Posterior vena cava (tissue), 2 donors: ENCODE measurements at regions of chr6 and their contacts with region 1.

Region 1: DNA sequence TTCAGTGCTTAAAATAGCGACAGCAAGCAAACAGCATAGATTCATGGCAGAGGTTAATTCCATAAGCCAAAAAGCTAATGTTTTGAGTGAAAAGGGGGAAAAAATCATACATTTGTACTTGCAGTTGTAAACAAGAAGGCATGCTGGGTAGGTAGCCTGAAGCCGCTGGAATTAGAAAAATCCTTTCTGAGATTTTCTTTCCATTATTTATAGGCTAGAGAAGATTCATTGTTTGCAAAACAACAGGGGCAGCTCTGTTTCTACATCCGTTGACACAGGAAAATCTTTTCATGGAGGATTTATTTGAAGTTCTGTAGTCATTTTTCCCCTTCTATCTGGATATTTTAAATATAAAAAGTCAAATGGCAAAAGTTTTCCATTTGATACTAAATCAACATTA is 843.9 kb downstream of the QKI start:
- DNase-seq: no peak

Region 2: DNA sequence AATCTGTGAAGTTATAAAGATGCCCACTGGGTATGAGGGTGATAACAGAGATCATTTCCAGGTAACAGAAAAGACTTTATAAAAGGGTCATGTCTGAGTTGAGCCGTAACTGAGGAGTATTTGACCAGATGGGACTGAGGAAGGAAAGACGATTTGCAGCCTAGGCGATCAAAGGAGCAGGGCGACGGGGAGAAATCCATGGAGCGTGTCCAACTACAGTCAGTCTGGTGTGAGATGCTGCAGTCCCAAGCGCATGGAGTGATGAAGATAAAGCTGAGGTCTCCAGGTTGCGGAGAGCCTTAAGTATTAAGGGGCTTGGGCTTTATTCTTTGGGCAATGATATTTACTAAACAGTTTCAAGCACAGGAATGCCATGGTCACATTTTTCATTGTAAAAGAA is 1697.5 kb before region 1 on chr6:
- intact Hi-C with region 1: loop called in 1 of 2 experiments (anchors 5 kb)
- DNase-seq: no peak

Region 3: DNA sequence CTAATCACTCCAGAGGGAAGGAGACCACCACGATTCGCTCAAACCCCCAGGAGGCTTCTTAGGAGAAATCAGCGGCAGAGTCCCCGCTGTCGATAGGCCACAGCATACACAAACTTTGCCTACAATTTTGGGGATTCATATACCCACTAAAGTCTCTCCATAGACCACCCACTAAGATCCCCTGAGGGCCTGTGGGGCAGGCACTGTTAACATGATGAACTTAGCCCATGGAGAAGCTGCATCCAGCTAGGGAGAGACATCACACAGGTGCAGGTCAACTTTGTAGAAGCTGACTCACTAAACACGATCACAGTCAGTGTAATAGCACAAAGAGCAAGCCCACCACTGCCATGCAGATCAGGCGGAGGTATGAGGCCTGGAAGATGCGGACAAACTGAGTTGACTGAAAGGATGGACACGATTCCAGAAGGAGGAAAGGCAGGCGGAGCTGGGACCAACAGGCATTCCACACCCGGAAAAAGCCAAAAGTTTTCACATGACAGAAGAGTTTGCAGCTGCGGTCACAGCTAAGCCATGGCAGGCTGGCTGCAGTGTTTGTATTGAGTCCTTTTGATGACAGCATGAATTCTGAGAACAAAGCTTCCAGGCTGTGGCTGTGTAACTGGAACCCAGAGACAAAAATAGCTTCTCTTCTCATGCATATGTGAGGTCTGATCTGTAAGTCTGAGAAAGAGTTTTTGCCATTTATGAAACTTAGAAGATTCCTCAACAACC is 919.6 kb before region 1 on chr6:
- intact Hi-C with region 1: no loop called
- DNase-seq: no peak

Region 4: DNA sequence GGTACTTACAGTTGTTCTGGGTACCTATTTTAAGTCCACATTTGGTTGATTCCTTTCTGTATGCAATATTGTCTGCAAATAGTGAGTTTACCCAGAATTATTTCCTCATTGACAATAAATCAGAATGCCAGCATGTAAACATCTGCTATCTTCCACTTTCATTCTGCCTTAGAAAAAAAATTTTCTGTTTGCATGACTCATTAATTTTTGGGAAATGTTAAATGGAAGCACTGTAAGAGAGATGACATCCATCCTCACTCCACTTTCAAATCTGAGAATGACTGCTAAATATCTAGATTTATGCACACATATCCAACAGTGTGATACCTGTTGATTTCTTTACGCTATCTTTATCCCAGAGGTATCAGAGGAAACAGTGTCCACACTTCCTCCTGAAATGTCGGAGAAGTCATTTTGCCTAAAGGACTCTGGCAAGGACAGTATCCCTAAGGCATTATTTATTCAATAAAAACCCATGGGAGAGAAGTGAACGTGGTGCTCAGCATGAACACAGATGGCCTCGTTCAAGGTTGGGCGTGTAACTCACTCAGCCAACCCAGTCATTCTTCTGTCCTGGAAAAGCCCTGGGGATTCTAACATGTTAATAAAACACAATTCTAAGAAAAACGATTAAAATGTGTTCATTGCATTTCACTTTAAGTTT is 63.0 kb before region 1 on chr6:
- intact Hi-C with region 1: no loop called
- DNase-seq: no peak

Region 5: GRCh38 chr6:165497467-165497866 is 1239.0 kb after region 1 on chr6:
- intact Hi-C with region 1: no loop called
- DNase-seq: no peak